A673 (cell line): ENCODE measurements at regions of chr11 and their contacts with region 1.

Region 1: GRCh38 chr11:131977231-131977630 is 606.8 kb downstream of the NTM start:
- DNase-seq: peak; percentile 91
- H3K4me3 ChIP-seq: no peak overlapping the region
- H3K27ac ChIP-seq: peak overlapping the region; percentile 89
- H3K4me1 ChIP-seq: peaks cover 77% of the 10 kb centered on the region
- H3K27me3 ChIP-seq: no peaks in the 10 kb centered on the region
- CTCF ChIP-seq: no peak

Region 2: GRCh38 chr11:132022733-132023478 is 45.7 kb after region 1 on chr11:
- CTCF ChIA-PET with region 1: no interaction called
- POLR2A ChIA-PET with region 1: no interaction called
- intact Hi-C with region 1: loop called (anchors 2 kb)
- DNase-seq: peak; percentile 84
- H3K4me3 ChIP-seq: no peak overlapping the region
- H3K27ac ChIP-seq: peak overlapping the region; percentile 69
- H3K4me1 ChIP-seq: peaks cover 47% of the 10 kb centered on the region
- H3K27me3 ChIP-seq: no peaks in the 10 kb centered on the region
- CTCF ChIP-seq: no peak

Region 3: GRCh38 chr11:132072044-132072857 is 95.0 kb after region 1 on chr11:
- CTCF ChIA-PET with region 1: no interaction called
- POLR2A ChIA-PET with region 1: no interaction called
- intact Hi-C with region 1: loop called (anchors 2 kb)
- DNase-seq: peak; percentile 97
- H3K4me3 ChIP-seq: no peak overlapping the region
- H3K27ac ChIP-seq: peak overlapping the region; percentile 91
- H3K4me1 ChIP-seq: peaks cover 30% of the 10 kb centered on the region
- H3K27me3 ChIP-seq: no peaks in the 10 kb centered on the region
- CTCF ChIP-seq: no peak

Region 4: GRCh38 chr11:132126973-132127899 is 150.0 kb after region 1 on chr11:
- CTCF ChIA-PET with region 1: interaction called, 5 read pairs
- POLR2A ChIA-PET with region 1: no interaction called
- intact Hi-C with region 1: loop called (anchors 2 kb)
- DNase-seq: peak; percentile 90
- H3K4me3 ChIP-seq: no peak overlapping the region
- H3K27ac ChIP-seq: peak overlapping the region; percentile 72
- H3K4me1 ChIP-seq: peaks cover 21% of the 10 kb centered on the region
- H3K27me3 ChIP-seq: no peaks in the 10 kb centered on the region
- CTCF ChIP-seq: peak; percentile 78

Region 5: DNA sequence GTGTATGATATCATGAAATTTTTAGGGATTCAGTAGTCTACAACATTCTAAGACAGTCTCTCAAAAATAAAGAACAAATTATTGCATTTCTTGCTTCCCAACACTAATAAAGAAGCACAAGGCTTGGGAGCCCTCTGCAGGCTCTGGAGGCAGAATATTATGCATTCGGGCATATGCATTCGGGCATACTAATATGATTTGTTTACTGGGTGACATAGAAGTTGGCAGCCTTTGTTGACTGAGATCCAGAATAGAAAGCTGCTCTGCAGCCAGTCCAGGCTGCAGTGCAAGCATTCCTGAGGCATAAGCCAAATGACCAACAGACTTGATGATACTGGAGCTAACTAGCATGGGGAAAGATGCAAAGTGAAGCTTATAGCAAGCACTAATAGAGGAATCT is 609.6 kb after region 1 on chr11:
- CTCF ChIA-PET with region 1: no interaction called
- POLR2A ChIA-PET with region 1: no interaction called
- intact Hi-C with region 1: no loop called
- DNase-seq: no peak
- H3K4me3 ChIP-seq: no peak overlapping the region
- H3K27ac ChIP-seq: no peak overlapping the region
- H3K4me1 ChIP-seq: no peaks in the 10 kb centered on the region
- H3K27me3 ChIP-seq: peaks cover 25% of the 10 kb centered on the region
- CTCF ChIP-seq: no peak